Activated CD4-positive, alpha-beta T cell treated with anti-CD3 and anti-CD28 coated beads for 36 hours (primary cell): ENCODE measurements at regions of chr9 and their contacts with region 1.

Region 1: GRCh38 chr9:113011911-113012381 is at the start of gene ZNF883:
- DNase-seq: peak; percentile 66
- ATAC-seq: peak; percentile 68
- H3K4me3 Mint-ChIP-seq: peak within 1 kb of the TSS; percentile 57
- H3K27ac Mint-ChIP-seq: no peak within 1 kb of the TSS
- H3K4me1 Mint-ChIP-seq: peaks cover 4% of the 10 kb centered on the region
- H3K27me3 Mint-ChIP-seq: peaks cover 15% of the 10 kb centered on the region
- total RNA-seq, gene ZNF883: 1.1 to 1.3 TPM

Region 2: DNA sequence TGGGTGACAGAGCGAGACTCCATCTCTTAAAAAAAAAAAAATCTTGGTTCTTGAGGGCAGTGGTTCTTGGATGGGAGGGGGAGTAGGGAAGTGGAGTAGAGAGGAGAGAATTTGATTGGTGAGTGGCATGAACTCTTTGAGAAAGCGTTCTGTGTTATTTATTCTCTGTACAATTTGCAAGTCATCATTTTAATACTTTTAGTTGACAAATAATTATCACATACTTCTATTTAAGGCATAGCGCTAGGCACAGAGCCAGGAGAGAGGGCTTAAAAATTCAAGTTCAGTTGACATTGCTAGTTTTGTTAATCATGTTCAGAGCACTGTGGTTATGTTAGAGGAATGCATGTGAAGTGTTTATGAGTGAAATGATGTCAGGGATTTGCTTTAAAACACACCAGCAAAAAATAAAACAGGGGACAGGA is 607.4 kb before region 1 on chr9:
- CTCF ChIA-PET with region 1: no interaction called
- POLR2A ChIA-PET with region 1: no interaction called
- intact Hi-C with region 1: loop called in 1 of 2 experiments (anchors 10 kb)
- DNase-seq: no peak
- ATAC-seq: no peak
- H3K4me3 Mint-ChIP-seq: no peak overlapping the region
- H3K27ac Mint-ChIP-seq: no peak overlapping the region
- H3K4me1 Mint-ChIP-seq: no peaks in the 10 kb centered on the region
- H3K27me3 Mint-ChIP-seq: no peaks in the 10 kb centered on the region

Region 3: DNA sequence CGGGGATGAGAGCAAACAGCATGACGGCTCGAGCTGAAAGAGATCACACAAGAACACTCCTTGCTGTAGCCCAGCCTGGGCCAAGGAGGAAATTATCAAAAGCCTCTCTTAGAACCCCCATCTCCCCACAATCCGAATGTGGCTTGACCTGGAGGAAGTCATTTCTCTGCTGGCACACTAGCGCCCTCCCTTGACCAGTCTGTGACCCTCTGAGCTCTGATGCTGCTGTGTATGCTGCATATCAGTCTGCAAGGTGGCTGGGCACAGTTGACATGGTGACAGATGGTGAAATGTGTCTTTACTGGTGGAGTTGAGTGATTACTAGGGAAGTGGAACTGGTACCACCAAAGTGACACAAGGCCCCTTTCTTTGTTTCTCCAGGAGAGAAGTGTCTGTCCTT is 124.6 kb before region 1 on chr9:
- CTCF ChIA-PET with region 1: no interaction called
- POLR2A ChIA-PET with region 1: no interaction called
- intact Hi-C with region 1: no loop called
- DNase-seq: peak; percentile 38
- ATAC-seq: no peak
- H3K4me3 Mint-ChIP-seq: no peak overlapping the region
- H3K27ac Mint-ChIP-seq: no peak overlapping the region
- H3K4me1 Mint-ChIP-seq: no peaks in the 10 kb centered on the region
- H3K27me3 Mint-ChIP-seq: peaks cover 22% of the 10 kb centered on the region

Region 4: GRCh38 chr9:112997236-112997941 is 14.6 kb before region 1 on chr9:
- CTCF ChIA-PET with region 1: no interaction called
- POLR2A ChIA-PET with region 1: no interaction called
- intact Hi-C with region 1: loop called in 1 of 2 experiments (anchors 1 kb)
- DNase-seq: no peak
- ATAC-seq: no peak
- H3K4me3 Mint-ChIP-seq: no peak overlapping the region
- H3K27ac Mint-ChIP-seq: no peak overlapping the region
- H3K4me1 Mint-ChIP-seq: no peaks in the 10 kb centered on the region
- H3K27me3 Mint-ChIP-seq: no peaks in the 10 kb centered on the region